Mammary epithelial cell (primary cell): ENCODE measurements at regions of chr11 and their contacts with region 1.

Region 1: GRCh38 chr11:28107748-28108618 is at the starts of genes KIF18A and METTL15:
- DNase-seq: peak; percentile 99
- H3K4me3 ChIP-seq: peak within 1 kb of the TSS; percentile 77 to 93 (median 85)
- H3K27ac ChIP-seq: peak within 1 kb of the TSS; percentile 98
- H3K4me1 ChIP-seq: peaks cover 16% of the 10 kb centered on the region
- H3K27me3 ChIP-seq: no peaks in the 10 kb centered on the region
- CTCF ChIP-seq: no peak
- total RNA-seq, gene KIF18A: 1.0 to 11.6 TPM
- total RNA-seq, gene METTL15: 17.2 to 17.9 TPM

Region 2: GRCh38 chr11:27514558-27514957 is 593.4 kb before region 1 on chr11:
- CTCF ChIA-PET with region 1: no interaction called
- dilution Hi-C with region 1: no loop called
- in situ Hi-C with region 1: no loop called
- intact Hi-C with region 1: no loop called
- DNase-seq: no peak
- H3K4me3 ChIP-seq: no peak overlapping the region
- H3K27ac ChIP-seq: no peak overlapping the region
- H3K4me1 ChIP-seq: no peaks in the 10 kb centered on the region
- H3K27me3 ChIP-seq: no peaks in the 10 kb centered on the region
- CTCF ChIP-seq: no peak

Region 3: GRCh38 chr11:27718346-27718852 is 389.6 kb before region 1 on chr11:
- CTCF ChIA-PET with region 1: no interaction called
- dilution Hi-C with region 1: no loop called
- in situ Hi-C with region 1: no loop called
- intact Hi-C with region 1: loop called (anchors 2 kb)
- DNase-seq: peak; percentile 39
- H3K4me3 ChIP-seq: peak overlapping the region; percentile 41 to 45 (median 44)
- H3K27ac ChIP-seq: no peak overlapping the region
- H3K4me1 ChIP-seq: peaks cover 14% of the 10 kb centered on the region
- H3K27me3 ChIP-seq: peaks cover 45% of the 10 kb centered on the region
- CTCF ChIP-seq: no peak

Region 4: GRCh38 chr11:27839226-27839870 is 268.6 kb before region 1 on chr11:
- CTCF ChIA-PET with region 1: interaction called, 6 read pairs
- dilution Hi-C with region 1: no loop called
- in situ Hi-C with region 1: no loop called
- intact Hi-C with region 1: loop called (anchors 1 kb)
- DNase-seq: no peak
- H3K4me3 ChIP-seq: no peak overlapping the region
- H3K27ac ChIP-seq: no peak overlapping the region
- H3K4me1 ChIP-seq: no peaks in the 10 kb centered on the region
- H3K27me3 ChIP-seq: no peaks in the 10 kb centered on the region
- CTCF ChIP-seq: peak; percentile 49 to 54

Region 5: GRCh38 chr11:28836285-28837081 is 728.5 kb after region 1 on chr11:
- CTCF ChIA-PET with region 1: no interaction called
- dilution Hi-C with region 1: no loop called
- in situ Hi-C with region 1: no loop called
- intact Hi-C with region 1: loop called (anchors 10 kb)
- DNase-seq: peak; percentile 88
- H3K4me3 ChIP-seq: no peak overlapping the region
- H3K27ac ChIP-seq: peak overlapping the region; percentile 73
- H3K4me1 ChIP-seq: peaks cover 46% of the 10 kb centered on the region
- H3K27me3 ChIP-seq: no peaks in the 10 kb centered on the region
- CTCF ChIP-seq: no peak